ENCODE measurements at regions of chr13 and their contacts with region 1.

Region 1: DNA sequence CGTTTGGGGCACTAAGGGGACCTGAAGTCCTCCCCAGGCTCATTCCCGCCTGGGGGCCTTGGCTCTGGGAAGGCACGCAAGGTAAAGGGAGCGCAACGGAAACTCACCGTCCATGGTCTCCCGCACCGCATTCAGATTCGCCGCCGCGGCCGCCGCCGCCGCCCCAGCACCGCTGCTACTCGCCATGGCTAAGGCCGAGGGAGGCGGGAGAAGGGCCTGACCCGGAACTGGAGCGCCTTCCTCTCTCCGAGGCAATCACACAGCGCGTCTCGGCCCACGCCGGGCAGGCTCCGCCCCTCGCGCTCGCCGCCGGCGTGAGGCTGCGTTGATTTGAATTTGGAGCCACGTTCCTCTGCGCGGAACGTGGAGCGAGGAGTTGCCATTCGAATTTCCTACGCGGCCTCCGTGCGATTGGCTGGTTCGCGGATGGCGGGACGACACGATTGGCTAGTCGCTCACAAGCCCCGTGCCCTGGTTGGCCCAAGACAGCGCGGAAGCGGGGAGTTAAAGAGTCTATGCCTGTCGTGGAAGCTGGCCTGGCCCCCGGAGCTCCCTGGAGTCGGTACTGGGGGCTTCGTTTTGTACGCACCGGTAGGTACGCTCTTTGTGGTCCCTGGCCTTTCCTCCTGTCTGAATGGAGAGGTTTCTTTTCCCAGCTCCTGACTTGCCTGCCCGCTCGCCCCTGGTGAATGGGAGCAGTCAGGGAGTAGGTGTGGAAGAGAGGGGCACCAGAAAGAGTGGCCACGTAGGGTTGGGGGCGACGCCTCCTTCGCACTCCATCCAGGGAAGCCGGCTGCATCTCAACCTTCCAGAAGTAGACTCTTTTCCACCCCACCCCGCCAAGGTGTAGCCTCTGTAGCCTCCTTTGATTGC is at the starts of genes BORA and MZT1:
- DNase-seq: peak; percentile 85 to 96 (median 88)
- ATAC-seq: peak; percentile 95
- H3K4me3 ChIP-seq: peak within 1 kb of the TSS; percentile 82
- H3K27ac ChIP-seq: peak within 1 kb of the TSS; percentile 94
- H3K4me1 ChIP-seq: peaks cover 0 to 7% of the 10 kb centered on the region in 2 experiments; a peak in 4 of 5 replicates
- H3K27me3 ChIP-seq: no peaks in the 10 kb centered on the region
- CTCF ChIP-seq: no peak
- EP300 ChIP-seq: 0 out of 2 replicates have a peak, but pooled peaks have one; percentile 8
- POLR2A ChIP-seq: peak; percentile 74
- RAD21 ChIP-seq: no peak
- polyA plus RNA-seq, gene BORA: 12.7 to 18.8 TPM
- polyA plus RNA-seq, gene MZT1: 27.1 to 28.7 TPM

Region 2: GRCh38 chr13:72781451-72782439 is 54.1 kb after region 1 on chr13 and contains the starts of genes DIS3 and PIBF1:
- CTCF ChIA-PET with region 1: no interaction called
- POLR2A ChIA-PET with region 1: no interaction called
- in situ Hi-C with region 1: no loop called
- intact Hi-C with region 1: loop called (anchors 2 kb)
- DNase-seq: peak; percentile 81 to 96 (median 87)
- ATAC-seq: peak; percentile 97
- H3K4me3 ChIP-seq: peak within 1 kb of the TSS; percentile 95
- H3K27ac ChIP-seq: peak within 1 kb of the TSS; percentile 92
- H3K4me1 ChIP-seq: peaks cover 2 to 3% of the 10 kb centered on the region in 2 experiments; a peak in 4 of 5 replicates
- H3K27me3 ChIP-seq: no peaks in the 10 kb centered on the region
- CTCF ChIP-seq: no peak
- EP300 ChIP-seq: peak; percentile 16; the same call in 1 of the 2 replicates
- POLR2A ChIP-seq: peak; percentile 88
- RAD21 ChIP-seq: no peak
- polyA plus RNA-seq, gene DIS3: 6.0 to 8.5 TPM
- polyA plus RNA-seq, gene PIBF1: 9.1 to 14.7 TPM

Region 3: DNA sequence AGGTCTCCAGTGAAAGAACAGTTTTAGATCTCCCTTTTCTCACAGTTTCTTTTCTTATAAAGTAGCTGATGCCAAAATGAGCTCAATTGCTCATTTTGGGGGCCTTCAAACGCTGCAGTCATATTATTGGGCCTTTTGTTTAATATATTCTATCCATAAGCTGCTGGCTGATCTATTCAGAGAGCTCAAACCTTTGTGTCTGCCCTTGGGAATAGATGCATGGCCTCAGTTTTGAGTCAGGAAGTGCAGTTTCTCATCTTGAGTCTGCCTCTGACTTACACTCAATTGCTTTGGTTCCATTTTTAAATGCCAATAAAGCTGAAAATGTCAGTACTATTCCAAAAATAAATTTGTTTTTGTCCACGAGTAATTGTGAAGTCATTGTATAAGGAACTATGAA is 937.6 kb after region 1 on chr13:
- CTCF ChIA-PET with region 1: no interaction called
- POLR2A ChIA-PET with region 1: no interaction called
- in situ Hi-C with region 1: no loop called
- intact Hi-C with region 1: no loop called
- DNase-seq: no peak
- ATAC-seq: no peak
- H3K4me3 ChIP-seq: no peak overlapping the region
- H3K27ac ChIP-seq: no peak overlapping the region
- H3K4me1 ChIP-seq: no peaks in the 10 kb centered on the region; a peak in 1 of 5 replicates
- H3K27me3 ChIP-seq: peaks cover 0 to 9% of the 10 kb centered on the region in 2 experiments; a peak in 1 of 5 replicates
- CTCF ChIP-seq: no peak
- EP300 ChIP-seq: no peak
- POLR2A ChIP-seq: no peak
- RAD21 ChIP-seq: no peak